ENCODE measurements at regions of chr7 and their contacts with region 1.

Region 1: GRCh38 chr7:143850682-143851081 is 51.3 kb downstream of the TCAF1 start:
- DNase-seq: no peak
- H3K4me3 ChIP-seq: no peak overlapping the region
- H3K27ac ChIP-seq: no peak overlapping the region
- H3K4me1 ChIP-seq: no peaks in the 10 kb centered on the region
- H3K27me3 ChIP-seq: no peaks in the 10 kb centered on the region
- CTCF ChIP-seq: no peak
- EP300 ChIP-seq: no peak
- POLR2A ChIP-seq: no peak

Region 2: DNA sequence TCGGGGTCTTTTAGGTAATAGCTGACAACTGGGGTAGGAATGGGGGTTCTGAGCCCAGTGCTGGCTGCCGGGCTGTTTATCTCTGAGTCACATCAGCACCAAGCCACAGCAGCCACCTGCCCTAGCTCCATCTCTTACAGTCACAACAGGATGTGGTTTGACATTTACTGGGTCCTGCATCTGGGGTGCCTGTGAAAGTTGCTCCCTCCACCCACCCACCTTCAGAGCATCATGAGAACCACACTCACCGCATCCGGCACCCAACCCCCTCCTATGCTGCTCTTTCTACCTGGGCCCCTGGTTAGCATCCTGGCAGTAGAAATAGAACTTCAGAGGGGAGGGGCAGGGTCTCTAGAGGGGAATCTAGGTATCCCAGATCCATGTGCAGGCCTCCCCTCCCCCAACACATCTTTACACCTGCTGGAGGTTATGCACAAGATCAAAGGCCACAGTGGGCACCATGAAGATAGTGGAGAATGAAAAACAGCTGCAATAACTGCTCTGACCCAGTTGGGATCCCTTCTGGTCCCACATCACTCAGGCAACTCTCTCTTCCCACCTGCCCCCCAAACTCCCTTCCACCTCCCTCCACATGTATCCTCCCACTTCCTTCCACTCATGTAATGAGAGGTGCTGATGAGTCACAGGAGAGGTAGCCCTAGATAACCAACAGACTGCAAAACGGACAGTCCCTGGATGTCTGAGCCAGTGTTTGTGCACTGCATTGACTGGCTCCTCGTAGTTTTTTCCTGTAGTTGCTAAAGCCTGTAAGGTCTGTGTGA is 1041.7 kb before region 1 on chr7:
- in situ Hi-C with region 1: no loop called
- intact Hi-C with region 1: loop called (anchors 10 kb)
- DNase-seq: peak; percentile 77
- H3K4me3 ChIP-seq: no peak overlapping the region
- H3K27ac ChIP-seq: peak overlapping the region; percentile 40 to 65 (median 45)
- H3K4me1 ChIP-seq: no peaks in the 10 kb centered on the region
- H3K27me3 ChIP-seq: peaks cover 11% of the 10 kb centered on the region
- CTCF ChIP-seq: no peak
- EP300 ChIP-seq: no peak
- POLR2A ChIP-seq: no peak

Region 3: GRCh38 chr7:143958781-143959180 is 108.1 kb after region 1 on chr7:
- in situ Hi-C with region 1: no loop called
- intact Hi-C with region 1: no loop called
- DNase-seq: no peak
- H3K4me3 ChIP-seq: no peak overlapping the region
- H3K27ac ChIP-seq: no peak overlapping the region
- H3K4me1 ChIP-seq: no peaks in the 10 kb centered on the region
- H3K27me3 ChIP-seq: no peaks in the 10 kb centered on the region
- CTCF ChIP-seq: no peak
- EP300 ChIP-seq: no peak
- POLR2A ChIP-seq: no peak

Measured in transverse colon (tissue), 4 donors.